MCF 10A (cell line): ENCODE measurements at regions of chr1 and their contacts with region 1.

Region 1: GRCh38 chr1:115782571-115783281 is 14.2 kb upstream of the CASQ2 start:
- DNase-seq: peak; percentile 93
- H3K4me3 Mint-ChIP-seq: peak overlapping the region; percentile 54
- H3K27ac Mint-ChIP-seq: peak overlapping the region; percentile 99
- H3K4me1 Mint-ChIP-seq: peaks cover 34% of the 10 kb centered on the region
- H3K27me3 Mint-ChIP-seq: no peaks in the 10 kb centered on the region
- CTCF ChIP-seq: no peak

Region 2: DNA sequence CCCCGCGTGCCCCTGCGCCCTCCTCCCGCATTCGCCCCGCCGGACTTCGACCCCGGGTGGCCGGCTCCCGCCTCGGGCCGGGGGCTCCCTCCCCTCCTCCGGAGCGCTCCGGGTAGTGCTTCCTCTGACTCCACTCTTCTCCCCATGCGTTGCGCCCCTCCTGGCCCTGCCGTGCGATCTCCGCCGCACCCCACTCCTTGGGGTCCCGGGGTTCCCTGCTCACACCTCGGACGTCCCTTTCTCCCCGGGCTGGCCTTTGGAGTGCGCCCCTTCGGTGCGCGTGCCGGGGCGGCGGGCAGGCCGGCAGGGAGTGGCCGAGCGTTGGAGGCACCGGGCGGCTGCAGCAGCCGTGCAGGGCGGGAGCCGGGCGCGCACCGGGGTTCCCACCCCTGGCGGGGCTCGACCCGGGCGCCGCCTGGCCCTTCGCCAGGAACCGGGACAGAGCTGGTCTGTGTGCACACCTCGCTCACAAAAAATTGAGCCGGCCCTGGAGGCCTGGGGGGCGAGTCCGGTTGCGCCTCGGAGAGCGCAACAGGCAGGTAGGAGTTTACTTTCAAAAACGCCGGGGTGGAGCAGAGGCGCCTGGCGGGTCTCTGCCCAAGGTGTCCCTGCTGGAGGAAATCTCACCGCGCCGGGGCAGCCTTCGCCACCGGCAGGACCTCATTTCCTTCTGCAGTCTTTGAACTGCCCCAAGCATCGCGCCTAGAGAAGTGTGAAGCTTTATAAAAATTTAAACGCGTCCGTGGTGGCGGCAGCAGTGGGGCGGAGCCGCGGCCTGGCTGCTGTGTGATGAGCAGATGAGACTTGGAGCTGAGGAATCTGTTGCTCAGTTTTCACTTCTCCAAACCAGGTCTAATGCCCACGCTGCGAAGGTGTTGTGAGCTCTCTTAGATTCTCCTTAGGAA is 140.3 kb before region 1 on chr1:
- CTCF ChIA-PET with region 1: no interaction called
- POLR2A ChIA-PET with region 1: interaction called, 12 read pairs
- intact Hi-C with region 1: no loop called
- DNase-seq: peak; percentile 52
- H3K4me3 Mint-ChIP-seq: peak overlapping the region; percentile 68
- H3K27ac Mint-ChIP-seq: peak overlapping the region; percentile 59
- H3K4me1 Mint-ChIP-seq: peaks cover 13% of the 10 kb centered on the region
- H3K27me3 Mint-ChIP-seq: peaks cover 13% of the 10 kb centered on the region
- CTCF ChIP-seq: no peak

Region 3: DNA sequence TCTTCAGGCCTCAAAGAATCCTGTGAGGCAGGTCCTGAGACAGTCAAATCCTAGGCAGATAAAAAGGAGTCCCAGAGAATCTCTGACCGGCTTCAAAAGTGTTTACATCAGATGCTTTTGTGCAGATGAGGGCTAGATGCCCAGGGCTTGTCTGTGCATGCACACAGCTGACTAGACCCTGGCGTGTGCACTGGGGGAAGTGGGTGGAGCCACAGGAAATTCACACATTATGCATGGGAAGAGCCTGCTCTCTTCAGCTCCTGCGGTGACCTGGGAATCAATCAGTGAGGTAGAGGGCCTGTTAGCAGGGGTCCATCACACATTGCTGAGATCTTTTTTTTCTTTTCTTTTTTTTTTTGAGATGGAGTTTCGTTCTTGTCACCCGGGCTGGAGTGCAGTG is 94.8 kb after region 1 on chr1:
- CTCF ChIA-PET with region 1: no interaction called
- POLR2A ChIA-PET with region 1: interaction called, 12 read pairs
- intact Hi-C with region 1: no loop called
- DNase-seq: peak; percentile 80
- H3K4me3 Mint-ChIP-seq: no peak overlapping the region
- H3K27ac Mint-ChIP-seq: peak overlapping the region; percentile 31
- H3K4me1 Mint-ChIP-seq: peaks cover 19% of the 10 kb centered on the region
- H3K27me3 Mint-ChIP-seq: no peaks in the 10 kb centered on the region
- CTCF ChIP-seq: no peak

Region 4: DNA sequence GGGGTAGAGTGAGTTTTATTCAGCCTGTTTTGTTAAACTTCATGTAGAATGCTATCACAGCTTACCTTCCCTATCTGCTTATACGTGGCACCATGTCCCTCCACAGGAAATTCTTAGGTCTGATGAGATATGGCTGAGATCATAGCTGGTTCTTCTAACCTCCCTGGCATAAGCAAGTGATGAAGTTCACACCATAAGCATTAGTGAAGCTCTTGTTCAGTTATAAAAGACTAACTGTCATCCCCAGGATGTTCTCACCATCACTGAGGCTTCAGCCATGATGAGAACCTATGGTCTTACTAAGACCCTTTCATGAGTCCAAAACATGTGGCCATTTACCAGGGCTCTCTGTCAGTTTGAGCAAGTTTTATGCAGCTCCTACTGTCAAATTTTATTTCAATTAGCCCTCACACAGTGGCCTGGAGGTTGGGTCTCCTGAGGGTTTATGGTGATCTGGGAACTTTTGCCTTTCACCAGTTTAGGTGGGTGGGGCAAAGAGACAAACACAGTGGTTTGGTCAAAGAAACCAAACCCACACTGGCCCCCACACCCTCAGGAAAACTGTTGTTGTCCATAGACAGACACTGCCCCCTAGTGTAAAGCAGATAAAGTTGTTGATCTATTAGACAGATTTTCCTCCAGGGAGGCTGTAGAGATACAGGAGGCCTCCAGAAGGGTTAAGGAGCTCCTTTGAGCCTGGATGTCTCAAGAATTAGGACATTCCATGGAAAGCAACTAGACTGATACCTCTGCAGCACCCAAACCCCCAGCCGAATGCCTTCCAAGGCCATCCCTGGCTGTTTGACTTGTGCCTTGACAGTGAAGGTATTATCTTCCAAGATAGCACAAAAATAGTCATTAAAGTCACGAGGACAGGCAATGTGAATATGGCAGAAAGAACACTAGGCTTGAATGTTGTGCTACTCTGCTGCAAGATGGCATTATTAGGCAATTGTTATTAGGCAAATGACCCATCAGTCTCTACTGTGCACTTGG is 198.6 kb after region 1 on chr1:
- CTCF ChIA-PET with region 1: interaction called, 5 read pairs
- POLR2A ChIA-PET with region 1: interaction called, 58 read pairs
- intact Hi-C with region 1: no loop called
- DNase-seq: peak; percentile 63
- H3K4me3 Mint-ChIP-seq: no peak overlapping the region
- H3K27ac Mint-ChIP-seq: no peak overlapping the region
- H3K4me1 Mint-ChIP-seq: peaks cover 29% of the 10 kb centered on the region
- H3K27me3 Mint-ChIP-seq: no peaks in the 10 kb centered on the region
- CTCF ChIP-seq: peak; percentile 46

Region 5: DNA sequence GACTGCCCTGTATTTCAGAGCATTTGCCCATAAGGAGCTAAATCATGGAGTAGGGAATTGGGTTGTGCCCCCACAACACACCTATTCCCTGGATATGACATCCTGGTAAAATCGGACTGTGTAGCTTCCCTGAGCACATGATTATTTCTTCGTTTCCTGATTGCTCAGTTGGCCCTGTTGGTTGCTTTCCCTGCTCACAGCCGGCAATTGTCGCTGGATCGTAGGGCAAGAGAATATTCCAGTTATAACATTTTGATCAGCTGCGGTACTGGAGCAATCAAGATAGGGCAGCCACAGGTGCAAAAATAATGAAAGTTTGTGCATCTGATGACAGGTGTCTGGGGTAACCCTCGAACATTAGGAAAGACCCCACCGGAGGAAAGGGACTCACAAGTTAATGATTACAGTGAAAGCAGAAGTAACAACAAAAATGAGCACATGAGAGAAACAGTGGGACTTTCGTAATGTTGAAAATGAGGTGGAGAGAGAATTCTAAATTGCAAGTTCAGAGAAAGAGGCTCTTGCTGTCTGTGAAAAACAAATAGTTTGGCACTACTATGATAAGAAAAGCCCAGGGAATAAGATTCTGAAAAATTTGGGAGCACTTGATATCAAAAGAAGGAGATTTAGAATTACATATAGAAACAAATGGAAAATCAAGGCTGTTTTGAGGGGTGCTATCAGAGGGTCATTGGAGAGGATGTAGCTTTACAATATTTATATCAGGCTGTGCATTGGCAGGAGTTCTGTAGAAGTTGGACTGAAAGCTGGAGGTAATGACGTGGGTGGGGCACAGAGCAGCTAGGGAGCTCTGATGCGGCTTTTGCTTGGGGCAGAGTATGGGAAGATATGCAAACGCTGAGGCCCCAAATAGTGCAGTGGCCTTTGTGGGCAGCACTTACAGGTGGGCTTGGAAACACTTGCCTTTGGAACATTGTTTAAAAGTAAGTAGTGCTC is 328.1 kb after region 1 on chr1 and contains the start of gene MAB21L3:
- CTCF ChIA-PET with region 1: no interaction called
- POLR2A ChIA-PET with region 1: interaction called, 11 read pairs
- intact Hi-C with region 1: no loop called
- DNase-seq: peak; percentile 60
- H3K4me3 Mint-ChIP-seq: peak within 1 kb of the TSS; percentile 5
- H3K27ac Mint-ChIP-seq: peak within 1 kb of the TSS; percentile 86
- H3K4me1 Mint-ChIP-seq: peaks cover 33% of the 10 kb centered on the region
- H3K27me3 Mint-ChIP-seq: no peaks in the 10 kb centered on the region
- CTCF ChIP-seq: no peak
- total RNA-seq, gene MAB21L3: 2.5 and 2.8 TPM in 2 replicates